ENCODE measurements at regions of chr4 and their contacts with region 1.

Region 1: GRCh38 chr4:109424093-109424841 is 9.3 kb upstream of the SEC24B start:
- DNase-seq: no peak
- H3K4me3 ChIP-seq: no peak overlapping the region
- H3K27ac ChIP-seq: no peak overlapping the region
- H3K4me1 ChIP-seq: no peaks in the 10 kb centered on the region
- H3K27me3 ChIP-seq: no peaks in the 10 kb centered on the region
- CTCF ChIP-seq: no peak

Region 2: DNA sequence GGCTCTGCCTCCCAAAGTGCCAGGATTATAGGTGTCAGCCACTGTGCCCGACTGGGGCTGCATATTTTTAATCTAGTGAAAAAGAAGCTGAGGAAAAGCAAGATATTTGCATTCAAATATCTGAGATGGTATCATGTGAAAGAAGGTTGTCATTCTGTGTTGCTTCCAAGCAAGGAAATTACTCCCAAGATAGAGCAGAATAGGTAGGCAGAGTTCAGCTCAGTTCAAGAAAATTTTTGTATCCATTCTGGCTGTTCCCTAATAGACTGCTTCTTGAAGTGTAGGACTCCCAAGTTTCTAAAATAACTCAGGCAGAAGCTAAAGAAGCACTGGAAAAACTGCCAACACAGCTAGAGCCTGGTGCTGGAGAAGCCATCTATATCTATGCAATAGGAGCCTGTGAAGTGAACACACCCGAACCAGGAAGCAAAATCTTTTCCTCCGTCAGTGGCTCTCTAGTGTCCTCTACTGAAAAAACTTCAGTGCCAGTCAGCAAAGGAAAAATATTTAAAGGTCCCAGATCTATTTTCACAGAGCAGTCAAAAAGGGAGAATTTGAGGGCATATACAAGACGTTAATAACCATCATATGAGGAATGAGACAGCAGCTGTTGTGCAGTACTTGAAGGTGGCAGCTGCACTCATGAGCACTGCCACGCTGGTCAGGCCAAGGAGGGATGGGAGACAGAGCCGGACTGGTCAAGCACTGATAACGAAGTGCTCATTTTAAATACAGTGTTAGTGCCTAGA is 150.0 kb after region 1 on chr4:
- CTCF ChIA-PET with region 1: no interaction called
- POLR2A ChIA-PET with region 1: no interaction called
- intact Hi-C with region 1: no loop called
- DNase-seq: peak; percentile 1 to 38
- H3K4me3 ChIP-seq: no peak overlapping the region
- H3K27ac ChIP-seq: no peak overlapping the region
- H3K4me1 ChIP-seq: no peaks in the 10 kb centered on the region
- H3K27me3 ChIP-seq: no peaks in the 10 kb centered on the region
- CTCF ChIP-seq: no peak; the same call in 1 of the 2 replicates

Region 3: DNA sequence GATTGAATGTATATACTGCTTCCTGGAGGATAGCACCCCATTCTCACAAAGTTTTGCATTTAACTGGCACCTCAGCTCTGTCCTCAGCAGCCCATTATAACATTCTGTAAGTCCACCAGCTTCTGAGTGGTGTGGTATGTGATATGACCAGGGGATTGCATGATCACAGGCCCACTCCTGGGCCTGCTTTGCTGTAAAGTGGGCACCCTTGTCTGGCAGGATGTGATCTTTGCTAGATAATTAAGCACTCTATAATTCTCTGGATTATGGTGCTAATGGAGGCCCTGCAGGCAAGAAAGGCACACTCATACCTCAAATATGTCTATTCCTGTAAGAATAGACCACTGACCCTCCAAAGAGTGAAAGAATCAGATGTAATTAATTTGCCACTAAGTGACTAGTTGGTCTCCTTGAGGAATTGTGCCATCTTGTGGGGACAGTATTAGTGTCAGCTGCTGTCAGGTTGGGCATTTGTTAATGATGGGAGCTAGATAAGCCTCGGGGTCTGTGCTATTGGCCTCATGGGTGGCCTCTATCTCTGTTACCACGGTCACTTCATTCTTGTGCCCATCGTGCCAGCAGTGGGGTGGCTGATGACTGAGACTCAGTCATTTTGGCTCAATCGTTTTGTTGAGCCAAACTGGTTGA is 379.8 kb after region 1 on chr4:
- CTCF ChIA-PET with region 1: no interaction called
- POLR2A ChIA-PET with region 1: no interaction called
- intact Hi-C with region 1: loop called (anchors 1 kb)
- DNase-seq: peak; percentile 24 to 42
- H3K4me3 ChIP-seq: no peak overlapping the region
- H3K27ac ChIP-seq: no peak overlapping the region
- H3K4me1 ChIP-seq: no peaks in the 10 kb centered on the region
- H3K27me3 ChIP-seq: no peaks in the 10 kb centered on the region
- CTCF ChIP-seq: peak; percentile 56

Region 4: GRCh38 chr4:109977854-109978501 is 553.7 kb after region 1 on chr4:
- CTCF ChIA-PET with region 1: interaction called, 3 read pairs
- POLR2A ChIA-PET with region 1: no interaction called
- intact Hi-C with region 1: loop called (anchors 2 kb)
- DNase-seq: peak in 1 of 2 experiments; percentile 49
- H3K4me3 ChIP-seq: no peak overlapping the region
- H3K27ac ChIP-seq: no peak overlapping the region
- H3K4me1 ChIP-seq: no peaks in the 10 kb centered on the region
- H3K27me3 ChIP-seq: no peaks in the 10 kb centered on the region
- CTCF ChIP-seq: peak; percentile 75

Region 5: DNA sequence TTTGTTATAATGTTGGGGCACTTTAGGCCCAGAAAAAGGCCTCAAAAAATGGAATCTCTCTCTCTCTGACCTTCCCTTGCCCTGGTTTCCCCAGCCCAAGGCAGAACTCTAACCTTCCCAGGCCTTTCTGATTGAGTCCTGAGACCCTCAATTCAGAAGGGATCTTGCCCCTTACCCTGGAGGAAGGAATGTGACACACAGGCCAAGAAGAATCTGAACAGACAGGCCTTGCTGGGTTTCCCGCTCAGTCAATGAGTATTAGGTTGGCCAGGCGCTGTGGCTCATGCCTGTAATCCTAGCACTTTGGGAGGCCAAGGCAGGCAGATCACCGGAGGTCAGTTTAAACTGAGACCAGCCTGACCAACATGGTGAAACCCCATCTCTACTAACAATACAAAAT is 746.6 kb after region 1 on chr4:
- CTCF ChIA-PET with region 1: interaction called, 13 read pairs
- POLR2A ChIA-PET with region 1: no interaction called
- intact Hi-C with region 1: no loop called
- DNase-seq: no peak
- H3K4me3 ChIP-seq: no peak overlapping the region
- H3K27ac ChIP-seq: no peak overlapping the region
- H3K4me1 ChIP-seq: peaks cover 40% of the 10 kb centered on the region
- H3K27me3 ChIP-seq: no peaks in the 10 kb centered on the region
- CTCF ChIP-seq: no peak

Region 6: GRCh38 chr4:110516106-110516922 is 1092.0 kb after region 1 on chr4:
- CTCF ChIA-PET with region 1: no interaction called
- POLR2A ChIA-PET with region 1: no interaction called
- intact Hi-C with region 1: loop called (anchors 5 kb)
- DNase-seq: peak; percentile 64 to 72
- H3K4me3 ChIP-seq: peak overlapping the region; percentile 53; the same call in 1 of the 2 replicates
- H3K27ac ChIP-seq: no peak overlapping the region
- H3K4me1 ChIP-seq: no peaks in the 10 kb centered on the region
- H3K27me3 ChIP-seq: no peaks in the 10 kb centered on the region
- CTCF ChIP-seq: peak; percentile 78